ENCODE measurements at regions of chr13 and their contacts with region 1.

Region 1: GRCh38 chr13:114234645-114235421 is at the start of gene CDC16:
- DNase-seq: peak; percentile 53 to 87 (median 69)
- ATAC-seq: peak; percentile 94
- H3K4me3 ChIP-seq: peak within 1 kb of the TSS; percentile 87
- H3K4me3 Mint-ChIP-seq: peak within 1 kb of the TSS; percentile 82 to 93 (median 88)
- H3K27ac ChIP-seq: peak within 1 kb of the TSS; percentile 79
- H3K27ac Mint-ChIP-seq: peak within 1 kb of the TSS; percentile 78 to 91 (median 86)
- H3K4me1 ChIP-seq: peaks cover 9 to 11% of the 10 kb centered on the region in 2 donors
- H3K4me1 Mint-ChIP-seq: peaks cover 22 to 29% (median 26%) of the 10 kb centered on the region in 7 donors
- H3K27me3 ChIP-seq: no peaks in the 10 kb centered on the region
- H3K27me3 Mint-ChIP-seq: peaks cover 0 to 12% (median 4%) of the 10 kb centered on the region in 5 donors
- total RNA-seq, gene CDC16: 66.0 to 108 (median 88.7) TPM

Region 2: DNA sequence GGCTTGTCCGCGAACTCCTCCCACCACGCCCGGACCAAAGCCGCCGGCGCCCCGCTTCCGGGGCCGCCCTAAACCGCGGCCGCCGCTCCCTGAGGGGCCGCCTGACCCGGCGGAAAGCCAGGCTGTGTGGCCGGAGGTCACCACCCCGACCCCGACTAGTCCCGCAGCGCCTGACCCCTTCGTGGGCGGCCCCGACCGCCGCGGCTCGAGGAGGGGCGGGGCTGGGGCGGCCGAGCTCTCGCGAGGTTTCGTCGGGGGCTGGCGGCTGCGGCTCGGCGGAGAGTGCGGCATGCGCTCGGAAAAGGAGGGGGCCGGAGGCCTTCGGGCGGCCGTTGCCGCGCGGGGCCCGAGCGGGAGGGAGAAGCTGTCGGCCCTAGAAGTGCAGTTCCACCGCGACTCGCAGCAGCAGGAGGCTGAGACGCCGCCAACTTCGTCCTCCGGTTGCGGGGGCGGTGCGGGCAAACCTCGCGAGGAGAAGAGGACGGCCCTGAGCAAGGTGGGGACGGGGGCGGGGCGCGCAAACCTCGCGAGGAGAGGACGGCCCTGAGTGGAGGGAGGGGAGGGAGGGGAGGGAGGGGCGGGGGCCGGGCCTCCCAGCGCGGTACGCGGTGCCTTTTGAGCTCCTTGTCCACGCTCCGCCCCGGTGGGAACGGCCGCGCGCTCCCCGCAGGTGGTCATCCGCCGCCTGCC is 46.7 kb after region 1 on chr13 and contains the start of gene UPF3A:
- CTCF ChIA-PET with region 1: no interaction called
- POLR2A ChIA-PET with region 1: interaction called, 8 read pairs
- intact Hi-C with region 1: loop called (anchors 1 to 2 kb)
- DNase-seq: peak; percentile 83 to 96 (median 93)
- ATAC-seq: peak; percentile 92
- H3K4me3 ChIP-seq: peak within 1 kb of the TSS; percentile 77
- H3K4me3 Mint-ChIP-seq: peak within 1 kb of the TSS; percentile 82 to 98 (median 94)
- H3K27ac ChIP-seq: peak within 1 kb of the TSS; percentile 94
- H3K27ac Mint-ChIP-seq: peak within 1 kb of the TSS; percentile 94 to 99 (median 99)
- H3K4me1 ChIP-seq: peaks cover 29 to 34% of the 10 kb centered on the region in 2 donors
- H3K4me1 Mint-ChIP-seq: peaks cover 31 to 59% (median 45%) of the 10 kb centered on the region in 7 donors
- H3K27me3 ChIP-seq: no peaks in the 10 kb centered on the region
- H3K27me3 Mint-ChIP-seq: no peaks in the 10 kb centered on the region
- total RNA-seq, gene UPF3A: 30.1 to 88.7 (median 62.9) TPM

Measured in naive thymus-derived CD4-positive, alpha-beta T cell (primary cell).